ENCODE measurements at regions of chr7 and their contacts with region 1.

Region 1: GRCh38 chr7:134632937-134633540 is 13.6 kb upstream of the BPGM start:
- DNase-seq: no peak
- ATAC-seq: peak; percentile 76
- H3K4me3 ChIP-seq: no peak overlapping the region
- H3K27ac ChIP-seq: no peak overlapping the region
- H3K4me1 ChIP-seq: peaks cover 16% of the 10 kb centered on the region
- H3K27me3 ChIP-seq: no peaks in the 10 kb centered on the region
- CTCF ChIP-seq: peak; percentile 63 to 80 (median 76)
- EP300 ChIP-seq: no peak
- POLR2A ChIP-seq: no peak
- RAD21 ChIP-seq: peak; percentile 92

Region 2: DNA sequence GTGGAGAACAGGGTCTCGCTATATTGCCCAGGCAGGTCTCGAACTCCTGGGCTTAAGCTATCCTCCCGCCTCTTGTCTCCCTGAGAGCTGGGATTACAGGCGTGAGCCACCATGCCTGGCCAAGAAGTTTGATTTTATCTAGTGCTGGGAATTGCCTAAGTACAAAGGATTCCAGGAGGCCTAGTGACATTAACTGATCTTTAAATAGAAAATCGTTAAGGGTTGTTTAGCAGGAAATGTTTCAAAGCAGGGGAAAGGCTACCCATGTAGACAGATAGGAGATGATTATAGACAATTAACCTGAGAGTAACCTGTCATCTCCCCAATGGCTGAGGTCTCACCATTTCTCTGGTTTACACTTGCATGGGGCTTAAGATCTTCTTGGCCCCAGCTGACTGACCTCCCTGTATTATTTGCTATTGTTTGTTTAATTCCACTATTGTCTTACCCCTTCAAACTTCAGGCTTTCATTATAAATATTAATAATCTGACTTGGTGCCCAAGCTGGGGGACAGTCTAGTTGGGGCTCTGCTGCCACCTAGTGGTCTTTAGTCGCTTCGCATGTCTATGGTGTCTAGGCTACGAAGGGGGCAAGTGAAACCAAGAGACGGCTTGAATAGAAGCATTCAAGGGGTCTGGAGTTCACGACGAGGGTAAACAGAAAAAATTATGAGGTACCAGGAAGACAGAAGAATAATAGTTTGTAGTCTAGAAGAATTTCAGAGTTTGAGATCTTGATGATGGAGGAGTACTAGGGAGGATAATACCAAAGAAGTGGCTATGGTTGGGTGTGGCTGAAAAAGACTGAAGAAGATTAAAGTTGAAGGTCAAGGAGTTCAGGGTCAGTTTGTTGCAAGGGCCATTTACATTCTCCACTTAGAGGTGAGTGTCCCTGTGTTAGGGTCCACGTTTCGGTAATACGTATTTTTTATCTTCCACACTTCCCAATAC is 26.8 kb before region 1 on chr7:
- CTCF ChIA-PET with region 1: interaction called, 12 read pairs
- POLR2A ChIA-PET with region 1: no interaction called
- RAD21 ChIA-PET with region 1: interaction called, 3 read pairs
- SMC1A ChIA-PET with region 1: interaction called, 12 read pairs
- in situ Hi-C with region 1: no loop called
- intact Hi-C with region 1: no loop called
- DNase-seq: no peak
- ATAC-seq: peak; percentile 99
- H3K4me3 ChIP-seq: no peak overlapping the region
- H3K27ac ChIP-seq: no peak overlapping the region
- H3K4me1 ChIP-seq: no peaks in the 10 kb centered on the region
- H3K27me3 ChIP-seq: no peaks in the 10 kb centered on the region
- CTCF ChIP-seq: peak; percentile 86 to 91 (median 88)
- EP300 ChIP-seq: no peak
- POLR2A ChIP-seq: no peak
- RAD21 ChIP-seq: peak; percentile 92

Region 3: GRCh38 chr7:134657526-134657925 is 24.5 kb after region 1 on chr7:
- CTCF ChIA-PET with region 1: interaction called, 12 read pairs
- POLR2A ChIA-PET with region 1: no interaction called
- RAD21 ChIA-PET with region 1: interaction called, 4 read pairs
- SMC1A ChIA-PET with region 1: interaction called, 6 read pairs
- in situ Hi-C with region 1: no loop called
- intact Hi-C with region 1: no loop called
- DNase-seq: no peak
- ATAC-seq: no peak
- H3K4me3 ChIP-seq: no peak overlapping the region
- H3K27ac ChIP-seq: no peak overlapping the region
- H3K4me1 ChIP-seq: no peaks in the 10 kb centered on the region
- H3K27me3 ChIP-seq: no peaks in the 10 kb centered on the region
- CTCF ChIP-seq: no peak
- EP300 ChIP-seq: no peak
- POLR2A ChIP-seq: no peak
- RAD21 ChIP-seq: no peak

Region 4: DNA sequence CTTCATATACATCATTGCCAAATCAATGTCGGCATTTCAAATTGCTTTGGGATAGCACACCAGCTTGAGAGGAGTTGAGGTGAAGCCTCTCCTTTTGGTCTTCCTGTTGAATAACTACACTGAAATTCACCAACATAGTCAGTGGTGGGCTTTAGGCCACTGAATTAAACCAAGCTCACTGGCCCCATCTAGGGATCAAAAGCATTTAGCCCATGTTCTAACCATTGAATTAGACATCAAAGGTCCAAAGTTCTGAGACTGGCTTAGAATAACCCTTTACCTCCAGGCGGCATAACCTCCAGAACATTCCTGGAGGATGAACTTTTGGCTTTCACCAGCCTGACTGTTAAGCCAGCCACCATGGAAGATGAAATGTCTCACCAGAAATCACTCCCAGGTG is 68.2 kb after region 1 on chr7:
- CTCF ChIA-PET with region 1: interaction called, 125 read pairs
- POLR2A ChIA-PET with region 1: no interaction called
- RAD21 ChIA-PET with region 1: interaction called, 40 read pairs
- SMC1A ChIA-PET with region 1: interaction called, 98 read pairs
- in situ Hi-C with region 1: loop called (anchors 5 kb)
- intact Hi-C with region 1: loop called (anchors 1 kb)
- DNase-seq: no peak
- ATAC-seq: peak; percentile 75
- H3K4me3 ChIP-seq: no peak overlapping the region
- H3K27ac ChIP-seq: no peak overlapping the region
- H3K4me1 ChIP-seq: no peaks in the 10 kb centered on the region
- H3K27me3 ChIP-seq: peaks cover 0 to 7% of the 10 kb centered on the region in 2 experiments; a peak in 3 of 4 replicates
- CTCF ChIP-seq: peak; percentile 29 to 56 (median 47); a peak in 5 of 6 replicates
- EP300 ChIP-seq: no peak
- POLR2A ChIP-seq: no peak
- RAD21 ChIP-seq: peak; percentile 62

Region 5: DNA sequence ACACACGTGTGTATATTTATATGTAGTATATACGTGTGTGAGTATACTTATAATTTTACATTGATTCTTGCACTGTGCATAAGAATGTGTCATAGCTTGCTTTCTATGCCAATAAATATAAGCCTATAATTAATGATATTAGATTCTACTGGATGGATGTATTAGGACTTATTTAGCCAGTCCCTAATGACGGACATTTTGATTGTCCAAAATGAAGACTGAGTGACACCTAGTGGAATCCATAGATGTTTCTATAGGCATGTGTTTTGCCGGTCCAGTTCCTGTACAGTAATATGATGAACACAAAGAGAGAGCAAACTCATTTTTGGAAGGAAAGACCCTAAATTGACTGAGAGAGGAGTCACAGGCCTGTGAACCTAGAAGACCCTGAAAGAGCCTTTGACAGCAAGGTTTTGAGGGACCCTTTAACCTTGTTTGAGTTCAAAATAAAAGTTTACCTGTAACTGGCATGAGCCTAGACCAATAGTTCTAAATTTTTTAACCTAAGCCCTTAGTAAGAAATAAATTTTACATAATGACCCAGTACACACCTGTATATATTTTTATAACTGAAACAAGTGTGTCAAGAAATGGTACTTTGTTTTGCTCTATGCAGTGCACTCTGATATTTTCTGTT is 310.8 kb after region 1 on chr7:
- CTCF ChIA-PET with region 1: interaction called, 168 read pairs
- POLR2A ChIA-PET with region 1: interaction called, 3 read pairs
- RAD21 ChIA-PET with region 1: interaction called, 112 read pairs
- SMC1A ChIA-PET with region 1: interaction called, 60 read pairs
- in situ Hi-C with region 1: loop called (anchors 5 kb)
- intact Hi-C with region 1: loop called (anchors 1 kb)
- DNase-seq: no peak
- ATAC-seq: peak; percentile 97
- H3K4me3 ChIP-seq: no peak overlapping the region
- H3K27ac ChIP-seq: no peak overlapping the region
- H3K4me1 ChIP-seq: no peaks in the 10 kb centered on the region
- H3K27me3 ChIP-seq: no peaks in the 10 kb centered on the region
- CTCF ChIP-seq: peak; percentile 49 to 66 (median 55)
- EP300 ChIP-seq: no peak
- POLR2A ChIP-seq: no peak
- RAD21 ChIP-seq: peak; percentile 88

Region 6: GRCh38 chr7:135170274-135170997 is 537.4 kb after region 1 on chr7 and contains the start of gene CYREN:
- CTCF ChIA-PET with region 1: interaction called, 6 read pairs
- POLR2A ChIA-PET with region 1: interaction called, 4 read pairs
- RAD21 ChIA-PET with region 1: interaction called, 7 read pairs
- SMC1A ChIA-PET with region 1: interaction called, 14 read pairs
- in situ Hi-C with region 1: no loop called
- intact Hi-C with region 1: loop called (anchors 2 kb)
- DNase-seq: no peak
- ATAC-seq: peak; percentile 78
- H3K4me3 ChIP-seq: peak within 1 kb of the TSS; percentile 84
- H3K27ac ChIP-seq: peak within 1 kb of the TSS; percentile 96
- H3K4me1 ChIP-seq: peaks cover 24% of the 10 kb centered on the region
- H3K27me3 ChIP-seq: no peaks in the 10 kb centered on the region
- CTCF ChIP-seq: peak; percentile 69 to 88 (median 70)
- EP300 ChIP-seq: no peak; a peak in 1 of 4 replicates
- POLR2A ChIP-seq: peak; percentile 88; the same call in 1 of the 2 replicates
- RAD21 ChIP-seq: peak; percentile 74
- polyA plus RNA-seq, gene CYREN: 8.7 to 12.9 TPM

Measured in GM12878 (cell line).